A673 (cell line): ENCODE measurements at regions of chr1 and their contacts with region 1.

Region 1: GRCh38 chr1:30379684-30380624 is 343.4 kb downstream of the MATN1 start:
- DNase-seq: peak; percentile 87
- H3K4me3 ChIP-seq: no peak overlapping the region
- H3K27ac ChIP-seq: peak overlapping the region; percentile 73
- H3K4me1 ChIP-seq: peaks cover 60% of the 10 kb centered on the region
- H3K27me3 ChIP-seq: no peaks in the 10 kb centered on the region
- CTCF ChIP-seq: peak; percentile 81

Region 2: DNA sequence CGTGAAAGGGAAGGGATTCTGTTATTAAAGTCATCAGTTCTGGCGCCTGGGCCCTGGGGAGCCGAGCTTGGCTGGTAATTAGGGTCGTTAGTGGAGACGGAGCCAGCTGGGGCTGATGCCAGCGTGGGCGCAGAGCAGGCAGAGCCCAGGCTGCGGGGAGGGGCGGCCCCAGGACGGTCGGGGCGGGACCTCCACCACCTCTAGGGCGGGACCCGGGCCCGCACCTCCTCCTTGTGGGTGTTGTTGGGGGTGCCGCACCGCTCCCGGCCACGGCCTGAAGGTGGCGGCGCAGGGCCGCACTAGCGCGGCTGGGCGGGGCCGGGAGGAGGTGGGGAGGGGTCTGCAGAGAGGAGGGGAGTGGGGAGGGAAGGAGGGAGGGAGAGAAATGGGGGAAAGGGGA is 673.0 kb before region 1 on chr1:
- CTCF ChIA-PET with region 1: no interaction called
- POLR2A ChIA-PET with region 1: no interaction called
- intact Hi-C with region 1: loop called (anchors 5 kb)
- DNase-seq: peak; percentile 94
- H3K4me3 ChIP-seq: no peak overlapping the region
- H3K27ac ChIP-seq: peak overlapping the region; percentile 21
- H3K4me1 ChIP-seq: peaks cover 36% of the 10 kb centered on the region
- H3K27me3 ChIP-seq: no peaks in the 10 kb centered on the region
- CTCF ChIP-seq: peak; percentile 81

Region 3: DNA sequence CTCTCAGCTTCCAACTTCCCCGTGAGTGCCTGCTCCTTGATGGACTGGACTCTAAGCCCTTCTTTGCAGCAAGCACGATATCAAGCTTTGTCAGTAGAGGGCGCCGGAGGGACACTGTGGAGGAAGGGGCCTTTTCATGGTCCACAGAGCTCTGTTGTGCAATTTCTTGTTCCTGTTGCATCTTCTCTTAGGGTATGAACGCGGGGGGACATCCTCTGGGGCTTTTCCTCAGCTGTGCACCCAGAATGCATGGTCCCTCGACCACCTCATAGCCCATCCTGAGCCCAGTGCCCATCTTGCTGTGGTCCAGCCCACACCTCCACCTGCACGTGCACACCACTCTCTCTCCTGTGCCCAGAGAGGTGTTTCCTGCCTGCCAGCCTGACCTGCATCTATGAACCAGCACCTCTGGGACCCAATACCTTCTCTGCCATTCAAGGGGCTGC is 586.8 kb before region 1 on chr1:
- CTCF ChIA-PET with region 1: interaction called, 11 read pairs
- POLR2A ChIA-PET with region 1: no interaction called
- intact Hi-C with region 1: loop called (anchors 5 kb)
- DNase-seq: peak; percentile 93
- H3K4me3 ChIP-seq: no peak overlapping the region
- H3K27ac ChIP-seq: peak overlapping the region; percentile 83
- H3K4me1 ChIP-seq: peaks cover 6% of the 10 kb centered on the region
- H3K27me3 ChIP-seq: no peaks in the 10 kb centered on the region
- CTCF ChIP-seq: peak; percentile 90

Region 4: GRCh38 chr1:30111431-30111830 is 268.5 kb before region 1 on chr1:
- CTCF ChIA-PET with region 1: interaction called, 11 read pairs
- POLR2A ChIA-PET with region 1: no interaction called
- intact Hi-C with region 1: loop called (anchors 5 kb)
- DNase-seq: peak; percentile 83
- H3K4me3 ChIP-seq: no peak overlapping the region
- H3K27ac ChIP-seq: peak overlapping the region; percentile 55
- H3K4me1 ChIP-seq: peaks cover 8% of the 10 kb centered on the region
- H3K27me3 ChIP-seq: no peaks in the 10 kb centered on the region
- CTCF ChIP-seq: peak; percentile 77

Region 5: DNA sequence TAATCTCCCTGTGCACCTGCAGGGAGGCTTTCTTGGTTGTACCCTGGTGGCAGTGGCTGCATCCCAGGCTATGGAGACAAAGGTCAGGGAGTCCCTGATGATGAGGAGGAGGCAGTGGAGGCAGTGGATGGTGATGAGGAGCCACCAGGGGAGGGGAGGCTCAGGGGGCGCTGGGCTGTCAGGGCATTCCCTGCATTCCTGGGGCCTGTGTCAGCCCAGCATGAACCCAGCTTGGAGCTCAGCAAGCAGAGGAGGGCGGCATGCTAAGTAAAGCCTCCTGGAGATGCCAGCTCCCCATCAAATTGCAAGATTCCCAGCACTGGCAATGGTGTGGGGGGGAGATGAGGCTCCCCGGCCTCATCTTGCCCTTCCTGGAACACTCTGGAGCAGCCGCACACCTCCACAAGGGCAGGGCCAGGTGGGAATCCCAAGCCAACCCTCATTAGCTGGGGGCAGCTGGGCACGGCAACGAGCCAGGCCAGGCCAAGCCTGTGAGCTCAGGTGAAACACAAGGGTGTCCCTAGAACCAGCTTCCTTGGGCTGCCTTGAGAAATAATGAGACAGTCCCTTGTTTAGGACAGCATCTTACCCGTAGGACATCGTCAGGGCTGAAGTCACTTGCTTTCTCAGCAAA is 126.0 kb before region 1 on chr1:
- CTCF ChIA-PET with region 1: interaction called, 15 read pairs
- POLR2A ChIA-PET with region 1: no interaction called
- intact Hi-C with region 1: loop called (anchors 5 kb)
- DNase-seq: peak; percentile 73
- H3K4me3 ChIP-seq: no peak overlapping the region
- H3K27ac ChIP-seq: peak overlapping the region; percentile 100
- H3K4me1 ChIP-seq: peaks cover 94% of the 10 kb centered on the region
- H3K27me3 ChIP-seq: no peaks in the 10 kb centered on the region
- CTCF ChIP-seq: no peak

Region 6: GRCh38 chr1:30368651-30369240 is 11.2 kb before region 1 on chr1:
- CTCF ChIA-PET with region 1: interaction called, 12 read pairs
- POLR2A ChIA-PET with region 1: no interaction called
- intact Hi-C with region 1: no loop called
- DNase-seq: no peak
- H3K4me3 ChIP-seq: no peak overlapping the region
- H3K27ac ChIP-seq: no peak overlapping the region
- H3K4me1 ChIP-seq: no peaks in the 10 kb centered on the region
- H3K27me3 ChIP-seq: no peaks in the 10 kb centered on the region
- CTCF ChIP-seq: no peak